Ascending aorta (tissue), 2 donors: ENCODE measurements at regions of chr1 and their contacts with region 1.

Region 1: GRCh38 chr1:210342986-210343780 is 14.5 kb downstream of the HHAT start:
- DNase-seq: no peak
- H3K4me3 ChIP-seq: peak overlapping the region; percentile 38 to 53
- H3K27ac ChIP-seq: peak overlapping the region; percentile 14 to 48
- H3K4me1 ChIP-seq: peaks cover 0 to 7% of the 10 kb centered on the region in 2 donors
- H3K27me3 ChIP-seq: no peaks in the 10 kb centered on the region
- CTCF ChIP-seq: no peak

Region 2: GRCh38 chr1:209576798-209577197 is 766.4 kb before region 1 on chr1:
- intact Hi-C with region 1: no loop called
- DNase-seq: peak in 1 of 2 donors; percentile 83
- H3K4me3 ChIP-seq: no peak overlapping the region
- H3K27ac ChIP-seq: no peak overlapping the region
- H3K4me1 ChIP-seq: no peaks in the 10 kb centered on the region
- H3K27me3 ChIP-seq: no peaks in the 10 kb centered on the region
- CTCF ChIP-seq: peak; percentile 70 to 90 (median 86)

Region 3: GRCh38 chr1:210201671-210202070 is 141.5 kb before region 1 on chr1:
- intact Hi-C with region 1: no loop called
- DNase-seq: no peak
- H3K4me3 ChIP-seq: no peak overlapping the region
- H3K27ac ChIP-seq: no peak overlapping the region
- H3K4me1 ChIP-seq: no peaks in the 10 kb centered on the region
- H3K27me3 ChIP-seq: no peaks in the 10 kb centered on the region
- CTCF ChIP-seq: no peak

Region 4: DNA sequence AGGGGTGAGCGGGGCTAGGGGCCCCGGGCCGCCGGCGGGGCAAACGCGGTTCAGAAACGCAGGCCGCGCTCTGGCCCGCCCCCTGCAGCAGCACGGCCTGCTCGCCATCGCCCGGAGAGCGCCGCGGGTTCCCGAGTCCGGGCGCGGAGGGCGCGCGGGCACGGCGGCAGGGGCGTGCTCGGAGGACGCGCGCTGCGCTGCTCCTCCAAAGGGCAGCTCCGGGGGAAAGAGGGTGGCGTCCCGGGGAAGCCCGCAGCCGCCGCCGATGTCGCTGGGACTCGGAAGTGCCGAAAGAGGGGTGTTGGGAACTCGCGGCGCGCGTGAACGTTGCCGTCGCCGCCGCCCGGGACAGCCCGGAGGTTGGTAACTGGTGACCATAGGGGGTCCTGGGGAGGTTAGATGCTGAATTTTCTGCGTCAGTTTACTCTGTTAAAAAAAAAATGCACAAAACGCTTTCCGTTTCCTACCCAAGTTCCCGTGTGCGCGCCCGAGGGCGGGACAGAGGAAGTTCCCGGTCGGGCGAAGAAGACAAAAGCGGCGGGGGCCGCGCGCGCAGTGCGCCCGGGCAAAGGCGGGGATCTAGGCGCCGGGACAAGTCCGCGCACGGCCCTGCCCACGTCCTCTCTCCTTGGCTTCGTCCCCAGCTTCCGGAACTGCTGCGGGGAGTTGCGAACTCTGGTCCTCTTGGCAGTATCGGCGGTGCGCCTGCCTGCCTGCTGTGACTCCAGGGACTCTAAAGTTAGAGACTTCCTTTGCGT is 14.3 kb before region 1 on chr1 and contains the start of gene HHAT:
- intact Hi-C with region 1: loop called (anchors 2 kb)
- DNase-seq: peak; percentile 17 to 86
- H3K4me3 ChIP-seq: peak within 1 kb of the TSS; percentile 71 to 77
- H3K27ac ChIP-seq: peak within 1 kb of the TSS; percentile 86 to 95
- H3K4me1 ChIP-seq: peaks cover 5 to 6% of the 10 kb centered on the region in 2 donors
- H3K27me3 ChIP-seq: no peaks in the 10 kb centered on the region
- CTCF ChIP-seq: no peak
- total RNA-seq, gene HHAT: 1.2 TPM

Region 5: DNA sequence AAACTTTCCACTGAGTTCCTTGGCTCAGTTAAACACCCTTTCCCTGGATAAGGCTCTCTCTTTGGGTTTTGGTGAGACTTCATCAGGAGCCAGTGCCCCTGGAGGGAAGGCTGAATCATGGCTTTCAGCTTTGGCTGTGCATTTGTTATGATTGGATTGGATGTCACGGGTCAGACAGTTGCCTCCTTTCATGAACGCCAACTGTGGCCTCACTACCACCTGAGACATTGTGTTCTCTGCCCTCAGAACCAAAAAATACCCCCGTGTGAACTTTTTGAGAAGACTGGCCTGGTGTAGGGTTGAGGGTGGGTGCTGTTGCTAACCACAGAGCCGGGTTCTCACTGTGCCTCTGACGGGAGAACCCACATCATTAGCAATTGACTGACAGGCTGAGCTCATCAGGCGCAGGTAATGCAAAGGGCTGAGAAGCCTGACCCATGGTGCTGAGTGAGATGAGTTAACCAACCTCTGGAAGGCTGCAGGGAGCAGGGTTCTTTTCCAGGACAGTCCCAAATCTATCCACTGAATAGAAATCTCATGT is 51.2 kb after region 1 on chr1:
- intact Hi-C with region 1: loop called (anchors 10 kb)
- DNase-seq: peak; percentile 48 to 82
- H3K4me3 ChIP-seq: no peak overlapping the region
- H3K27ac ChIP-seq: peak overlapping the region; percentile 73 to 90
- H3K4me1 ChIP-seq: peaks cover 4 to 11% of the 10 kb centered on the region in 2 donors
- H3K27me3 ChIP-seq: no peaks in the 10 kb centered on the region
- CTCF ChIP-seq: no peak